ENCODE measurements at regions of chr3 and their contacts with region 1.

Region 1: GRCh38 chr3:128969993-128970739 is 23.7 kb downstream of the CFAP92 start:
- DNase-seq: peak; percentile 43 to 75 (median 64)
- ATAC-seq: peak; percentile 89
- H3K4me3 ChIP-seq: no peak overlapping the region
- H3K4me3 Mint-ChIP-seq: peak overlapping the region in 1 of 10 donors; percentile 11
- H3K27ac ChIP-seq: no peak overlapping the region
- H3K27ac Mint-ChIP-seq: no peak overlapping the region
- H3K4me1 ChIP-seq: no peaks in the 10 kb centered on the region
- H3K4me1 Mint-ChIP-seq: peaks cover 0 to 7% (median 6%) of the 10 kb centered on the region in 7 donors
- H3K27me3 ChIP-seq: no peaks in the 10 kb centered on the region
- H3K27me3 Mint-ChIP-seq: peaks cover 0 to 5% (median 0%) of the 10 kb centered on the region in 5 donors

Region 2: GRCh38 chr3:129016356-129016719 is 46.2 kb after region 1 on chr3:
- CTCF ChIA-PET with region 1: interaction called, 75 read pairs
- POLR2A ChIA-PET with region 1: interaction called, 48 read pairs
- intact Hi-C with region 1: loop called (anchors 1 kb)
- DNase-seq: peak in 7 of 9 donors; percentile 54 to 71 (median 65)
- ATAC-seq: peak; percentile 85
- H3K4me3 ChIP-seq: peak overlapping the region; percentile 41
- H3K4me3 Mint-ChIP-seq: peak overlapping the region; percentile 68 to 87 (median 84)
- H3K27ac ChIP-seq: peak overlapping the region; percentile 75
- H3K27ac Mint-ChIP-seq: peak overlapping the region; percentile 90 to 100 (median 97)
- H3K4me1 ChIP-seq: peaks cover 26 to 33% of the 10 kb centered on the region in 2 donors
- H3K4me1 Mint-ChIP-seq: peaks cover 31 to 66% (median 48%) of the 10 kb centered on the region in 7 donors
- H3K27me3 ChIP-seq: no peaks in the 10 kb centered on the region
- H3K27me3 Mint-ChIP-seq: no peaks in the 10 kb centered on the region

Region 3: GRCh38 chr3:129052675-129053074 is 82.5 kb after region 1 on chr3:
- CTCF ChIA-PET with region 1: interaction called, 49 read pairs
- POLR2A ChIA-PET with region 1: interaction called, 8 read pairs
- intact Hi-C with region 1: loop called (anchors 1 kb)
- DNase-seq: no peak
- ATAC-seq: no peak
- H3K4me3 ChIP-seq: no peak overlapping the region
- H3K4me3 Mint-ChIP-seq: no peak overlapping the region
- H3K27ac ChIP-seq: no peak overlapping the region
- H3K27ac Mint-ChIP-seq: peak overlapping the region in 3 of 9 donors; percentile 38 to 69 (median 38)
- H3K4me1 ChIP-seq: no peaks in the 10 kb centered on the region
- H3K4me1 Mint-ChIP-seq: peaks cover 3 to 20% (median 9%) of the 10 kb centered on the region in 7 donors
- H3K27me3 ChIP-seq: no peaks in the 10 kb centered on the region
- H3K27me3 Mint-ChIP-seq: peaks cover 0 to 14% (median 0%) of the 10 kb centered on the region in 5 donors

Region 4: DNA sequence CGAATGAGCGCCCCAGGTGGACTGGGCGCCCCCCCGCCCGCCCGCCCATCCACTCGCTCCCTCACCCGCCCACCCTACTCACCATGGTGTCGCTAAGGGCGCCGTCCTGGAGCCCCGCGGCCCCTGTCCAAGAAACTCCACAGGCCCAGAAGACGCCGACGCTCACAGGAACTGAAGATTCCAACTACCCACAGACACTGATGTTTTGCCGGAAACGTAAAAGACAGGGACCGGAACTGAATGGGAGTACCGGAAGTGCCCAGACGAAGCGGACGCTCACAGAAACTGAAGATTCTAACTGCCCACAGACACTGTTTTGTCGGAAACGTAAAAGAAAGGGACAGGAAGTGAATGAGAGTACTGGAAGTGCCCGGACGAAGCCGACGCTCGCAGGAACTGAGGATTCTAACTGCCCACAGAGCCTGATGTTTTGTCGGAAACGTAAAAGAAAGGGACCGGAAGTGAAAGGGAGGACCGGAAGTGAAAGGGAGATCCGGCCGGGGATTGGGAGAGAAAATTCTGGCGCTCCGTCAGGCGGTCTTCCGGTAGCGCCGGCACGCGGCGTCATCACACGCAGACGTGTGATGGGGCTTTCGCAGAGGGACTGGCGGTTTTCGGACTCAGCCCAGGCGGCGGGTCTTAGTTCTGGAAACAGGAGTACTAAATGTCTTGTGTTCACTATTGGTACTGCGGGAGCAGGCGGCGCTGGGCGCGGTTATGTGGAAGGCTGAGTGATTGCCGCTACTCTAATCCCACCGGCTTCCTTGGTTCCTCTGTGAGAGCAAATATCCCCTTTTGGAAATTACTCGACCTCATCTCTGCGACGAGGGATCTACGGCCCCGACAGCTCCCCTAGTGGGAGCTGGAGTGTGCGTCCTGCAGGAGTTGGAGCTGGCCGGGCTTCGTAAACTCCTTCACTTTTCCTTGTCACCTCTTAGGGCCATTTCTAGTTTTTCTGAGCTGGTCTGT is 191.0 kb after region 1 on chr3 and contains the start of gene ISY1:
- CTCF ChIA-PET with region 1: interaction called, 10 read pairs
- POLR2A ChIA-PET with region 1: no interaction called
- intact Hi-C with region 1: loop called in 1 of 2 experiments (anchors 1 kb)
- DNase-seq: peak; percentile 68 to 92 (median 89)
- ATAC-seq: peak; percentile 90
- H3K4me3 ChIP-seq: peak within 1 kb of the TSS; percentile 94
- H3K4me3 Mint-ChIP-seq: peak within 1 kb of the TSS; percentile 84 to 100 (median 98)
- H3K27ac ChIP-seq: peak within 1 kb of the TSS; percentile 98
- H3K27ac Mint-ChIP-seq: peak within 1 kb of the TSS; percentile 97 to 100 (median 99)
- H3K4me1 ChIP-seq: peaks cover 22 to 24% of the 10 kb centered on the region in 2 donors
- H3K4me1 Mint-ChIP-seq: peaks cover 18 to 53% (median 40%) of the 10 kb centered on the region in 7 donors
- H3K27me3 ChIP-seq: no peaks in the 10 kb centered on the region
- H3K27me3 Mint-ChIP-seq: peaks cover 0 to 4% (median 0%) of the 10 kb centered on the region in 5 donors
- total RNA-seq, gene ISY1: 27.6 to 65.1 (median 37.4) TPM

Region 5: DNA sequence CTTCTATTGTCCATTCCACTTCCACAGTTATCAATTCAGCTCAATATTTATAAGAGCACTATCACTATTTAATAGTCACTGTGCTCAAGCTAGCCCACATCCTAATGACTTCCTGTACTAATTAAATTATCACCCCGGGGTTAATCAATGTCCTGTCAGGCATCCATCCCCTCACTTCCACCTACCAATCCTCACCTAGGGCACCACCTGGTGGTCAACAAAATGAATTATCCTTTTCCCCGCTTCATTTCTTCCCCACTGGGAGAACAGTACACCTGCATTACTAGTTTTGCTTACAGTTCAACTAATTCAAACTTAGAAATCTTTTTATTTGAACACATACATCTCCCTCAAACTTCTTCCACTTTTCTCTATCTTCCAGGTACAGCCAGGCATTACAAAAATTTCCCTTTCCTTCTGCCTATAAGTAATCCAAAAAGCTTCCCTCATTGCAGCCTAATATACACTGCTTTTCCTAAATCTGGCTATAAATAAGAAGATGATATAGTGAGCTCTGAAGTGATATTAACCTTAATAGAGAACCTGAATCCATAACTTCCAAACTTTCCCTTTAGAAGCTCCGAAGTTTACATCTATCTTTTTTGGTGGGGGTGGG is 854.9 kb after region 1 on chr3:
- CTCF ChIA-PET with region 1: no interaction called
- POLR2A ChIA-PET with region 1: no interaction called
- intact Hi-C with region 1: loop called in 1 of 2 experiments (anchors 2 kb)
- DNase-seq: peak in 8 of 9 donors; percentile 20 to 52 (median 40)
- ATAC-seq: peak; percentile 53
- H3K4me3 ChIP-seq: no peak overlapping the region
- H3K4me3 Mint-ChIP-seq: no peak overlapping the region
- H3K27ac ChIP-seq: no peak overlapping the region
- H3K27ac Mint-ChIP-seq: no peak overlapping the region
- H3K4me1 ChIP-seq: peaks cover 0 to 7% of the 10 kb centered on the region in 2 donors
- H3K4me1 Mint-ChIP-seq: peaks cover 12 to 26% (median 23%) of the 10 kb centered on the region in 7 donors
- H3K27me3 ChIP-seq: no peaks in the 10 kb centered on the region
- H3K27me3 Mint-ChIP-seq: no peaks in the 10 kb centered on the region

Measured in naive thymus-derived CD4-positive, alpha-beta T cell (primary cell).